ENCODE measurements at regions of chr2 and their contacts with region 1.

Region 1: DNA sequence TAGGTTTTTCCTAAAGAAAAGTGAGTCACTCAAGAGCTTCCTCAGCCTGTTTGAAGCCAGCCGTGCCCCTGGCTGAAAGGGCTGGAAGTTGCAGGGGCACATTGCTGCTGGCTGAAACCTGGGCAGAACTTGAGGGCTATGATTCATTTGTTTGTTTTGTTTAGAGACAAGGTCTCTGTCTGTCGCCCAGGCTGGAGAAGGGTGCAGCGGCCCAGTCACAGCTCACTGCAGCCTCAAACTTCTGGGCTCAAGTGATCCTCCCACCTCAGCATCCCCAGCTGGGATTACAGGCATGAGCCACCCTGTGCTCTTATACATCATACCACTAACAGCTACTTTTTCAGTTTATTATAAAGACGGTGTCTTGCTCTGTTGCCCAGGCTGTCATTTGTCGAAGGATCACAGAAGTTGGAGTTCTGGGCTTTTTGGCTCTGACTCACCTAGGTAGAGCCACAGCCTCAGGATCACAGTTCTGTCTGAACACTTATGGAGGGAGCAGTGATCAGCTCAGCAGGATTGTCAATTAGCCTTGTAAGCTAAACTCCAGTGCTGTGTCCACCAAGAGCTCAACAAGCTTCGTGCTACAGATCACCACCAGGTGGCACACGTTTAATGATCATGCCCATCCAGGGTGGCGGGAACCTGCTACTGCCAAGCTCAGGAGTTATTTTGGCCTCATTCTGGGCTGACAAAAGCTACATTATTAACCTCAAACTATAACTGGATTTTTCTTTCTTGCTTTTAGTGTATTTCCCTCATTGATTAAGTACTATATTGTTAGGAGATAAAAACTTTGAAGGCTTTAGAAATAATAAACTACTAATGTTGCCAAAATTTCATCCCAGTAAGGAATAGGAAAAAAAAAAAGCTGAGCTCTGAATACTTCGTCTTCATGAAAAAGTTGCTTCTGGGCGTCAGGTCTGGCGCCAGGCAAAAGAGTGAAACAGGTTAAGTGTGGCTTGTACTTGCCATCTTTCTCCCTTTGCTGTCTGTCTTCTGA is 57.9 kb downstream of the ARHGEF33 start:
- DNase-seq: peak; percentile 84
- H3K4me3 Mint-ChIP-seq: no peak overlapping the region
- H3K27ac Mint-ChIP-seq: no peak overlapping the region
- H3K4me1 Mint-ChIP-seq: no peaks in the 10 kb centered on the region
- H3K27me3 Mint-ChIP-seq: peaks cover 13% of the 10 kb centered on the region

Region 2: GRCh38 chr2:38935568-38936172 is 11.9 kb before region 1 on chr2:
- CTCF ChIA-PET with region 1: interaction called, 10 read pairs
- DNase-seq: no peak
- H3K4me3 Mint-ChIP-seq: no peak overlapping the region
- H3K27ac Mint-ChIP-seq: no peak overlapping the region
- H3K4me1 Mint-ChIP-seq: no peaks in the 10 kb centered on the region
- H3K27me3 Mint-ChIP-seq: peaks cover 6% of the 10 kb centered on the region

Region 3: GRCh38 chr2:39059366-39059952 is 111.9 kb after region 1 on chr2:
- CTCF ChIA-PET with region 1: interaction called, 16 read pairs
- DNase-seq: no peak
- H3K4me3 Mint-ChIP-seq: no peak overlapping the region
- H3K27ac Mint-ChIP-seq: peak overlapping the region; percentile 11
- H3K4me1 Mint-ChIP-seq: peaks cover 30% of the 10 kb centered on the region
- H3K27me3 Mint-ChIP-seq: no peaks in the 10 kb centered on the region

Region 4: DNA sequence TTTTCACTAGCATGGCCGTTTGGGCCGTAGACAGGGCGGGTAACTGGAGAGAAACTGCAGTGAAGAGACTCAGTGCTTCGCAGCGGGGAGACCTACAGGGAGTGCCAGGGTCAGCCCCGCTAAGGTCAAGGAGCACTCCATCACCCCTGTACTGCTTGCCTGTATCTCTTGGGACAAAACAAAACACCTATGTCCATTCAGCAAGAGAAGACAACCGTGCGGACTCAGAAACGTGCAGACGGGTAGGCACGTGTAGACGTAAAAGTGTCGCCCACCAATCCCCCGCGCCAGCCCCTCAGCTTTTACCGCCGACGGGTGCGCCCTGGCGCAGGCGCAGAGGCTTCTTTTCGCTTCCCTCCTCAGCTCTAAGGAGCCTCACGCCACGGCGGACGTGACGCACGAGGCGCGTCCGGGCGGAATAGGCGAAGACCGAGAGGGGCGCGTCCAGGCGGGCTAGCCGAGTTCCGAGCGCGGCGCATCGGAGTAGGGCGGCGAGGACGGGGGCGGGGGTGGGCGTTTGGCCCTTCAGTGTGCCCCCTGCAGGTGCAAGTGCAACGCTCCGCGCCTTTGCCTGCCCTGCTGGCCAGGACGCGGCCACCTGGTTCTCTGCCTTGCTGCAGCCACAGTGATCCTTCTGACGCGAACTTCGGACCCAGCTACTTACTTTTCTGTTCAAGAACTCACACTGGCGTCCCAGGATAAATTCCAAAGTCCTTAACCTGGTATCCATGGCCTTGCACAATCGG is 176.6 kb after region 1 on chr2:
- CTCF ChIA-PET with region 1: interaction called, 14 read pairs
- DNase-seq: peak; percentile 98
- H3K4me3 Mint-ChIP-seq: peak overlapping the region; percentile 92
- H3K27ac Mint-ChIP-seq: peak overlapping the region; percentile 99
- H3K4me1 Mint-ChIP-seq: peaks cover 68% of the 10 kb centered on the region
- H3K27me3 Mint-ChIP-seq: no peaks in the 10 kb centered on the region

Region 5: GRCh38 chr2:39234754-39235153 is 287.2 kb after region 1 on chr2:
- CTCF ChIA-PET with region 1: interaction called, 159 read pairs
- DNase-seq: no peak
- H3K4me3 Mint-ChIP-seq: no peak overlapping the region
- H3K27ac Mint-ChIP-seq: no peak overlapping the region
- H3K4me1 Mint-ChIP-seq: peaks cover 2% of the 10 kb centered on the region
- H3K27me3 Mint-ChIP-seq: peaks cover 3% of the 10 kb centered on the region

Region 6: GRCh38 chr2:39243476-39244123 is 296.1 kb after region 1 on chr2 and contains the start of gene CDKL4:
- CTCF ChIA-PET with region 1: interaction called, 12 read pairs
- DNase-seq: peak; percentile 64
- H3K4me3 Mint-ChIP-seq: peak within 1 kb of the TSS; percentile 58
- H3K27ac Mint-ChIP-seq: peak within 1 kb of the TSS; percentile 12
- H3K4me1 Mint-ChIP-seq: peaks cover 26% of the 10 kb centered on the region
- H3K27me3 Mint-ChIP-seq: peaks cover 20% of the 10 kb centered on the region